Endothelial cell of umbilical vein (primary cell): ENCODE measurements at regions of chr10 and their contacts with region 1.

Region 1: DNA sequence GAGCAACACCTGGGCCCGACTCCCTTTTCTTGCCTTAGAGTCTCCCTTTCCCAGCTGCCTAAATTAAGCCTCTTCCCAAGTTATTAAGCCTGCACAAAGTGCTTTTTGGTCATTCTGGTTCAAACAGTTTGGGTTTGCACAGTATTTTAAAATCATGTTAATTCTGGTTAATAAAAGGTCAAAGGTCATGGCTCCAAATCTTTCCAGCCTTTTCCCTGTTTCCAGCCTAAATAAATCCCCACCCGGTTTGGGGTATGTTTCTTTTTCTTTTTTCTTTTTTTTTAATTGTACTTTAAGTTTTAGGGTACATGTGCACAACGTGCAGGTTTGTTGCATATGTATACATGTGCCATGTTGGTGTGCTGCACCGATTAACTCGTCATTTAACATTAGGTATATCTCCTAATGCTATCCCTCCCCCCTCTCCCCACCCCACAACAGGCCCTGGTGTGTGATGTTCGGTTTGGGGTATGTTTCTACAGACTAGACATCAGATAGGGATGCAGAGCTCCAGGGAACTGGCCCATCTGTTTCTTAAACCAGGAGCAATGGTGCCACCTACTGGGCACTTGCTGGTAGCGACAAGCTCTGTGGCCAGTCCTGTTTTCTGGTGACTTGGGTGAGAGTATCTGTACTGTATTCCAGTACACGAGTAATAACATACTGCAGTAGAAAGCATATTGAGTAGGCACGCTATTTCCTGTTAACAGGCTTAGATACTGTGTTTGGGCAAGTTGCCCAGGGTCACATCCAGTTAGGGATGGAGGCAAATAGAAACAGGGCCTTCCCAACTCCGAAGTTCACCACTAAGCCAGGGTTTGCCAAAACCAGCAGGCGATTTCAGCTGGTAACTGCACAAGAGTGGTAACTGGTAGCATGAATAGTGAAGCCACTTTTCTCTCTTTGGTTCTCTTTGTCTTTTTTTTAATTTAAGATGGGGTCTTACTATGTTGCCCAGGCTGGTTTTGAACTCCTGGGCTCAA is 60.6 kb upstream of the TRIM8 start:
- DNase-seq: peak; percentile 86
- H3K4me3 ChIP-seq: no peak overlapping the region
- H3K27ac ChIP-seq: no peak overlapping the region
- H3K4me1 ChIP-seq: peaks cover 16% of the 10 kb centered on the region
- H3K27me3 ChIP-seq: no peaks in the 10 kb centered on the region
- CTCF ChIP-seq: peak; percentile 78 to 79
- POLR2A ChIP-seq: no peak

Region 2: DNA sequence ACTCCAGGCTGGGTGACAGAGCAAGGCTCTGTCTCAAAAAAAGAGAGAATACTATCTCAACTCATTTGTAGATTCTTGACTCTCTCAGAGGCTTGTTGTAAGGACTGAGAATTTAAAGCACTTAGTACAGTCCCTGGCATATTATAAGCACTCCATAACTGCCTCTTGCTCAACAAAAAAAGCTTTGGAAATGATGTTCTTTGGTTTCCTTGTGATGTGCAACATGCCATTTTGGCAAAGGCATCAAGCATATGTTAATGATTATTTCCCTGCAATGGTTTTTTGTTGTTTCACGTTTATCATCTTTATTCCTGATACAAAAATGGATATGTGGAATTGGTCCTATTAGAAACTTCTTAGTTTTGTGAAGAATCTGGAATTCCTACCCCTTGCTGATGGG is 415.9 kb before region 1 on chr10:
- CTCF ChIA-PET with region 1: interaction called, 13 read pairs
- POLR2A ChIA-PET with region 1: no interaction called
- dilution Hi-C with region 1: no loop called
- intact Hi-C with region 1: loop called (anchors 10 kb)
- DNase-seq: no peak
- H3K4me3 ChIP-seq: no peak overlapping the region
- H3K27ac ChIP-seq: no peak overlapping the region
- H3K4me1 ChIP-seq: no peaks in the 10 kb centered on the region
- H3K27me3 ChIP-seq: no peaks in the 10 kb centered on the region
- CTCF ChIP-seq: no peak
- POLR2A ChIP-seq: no peak

Region 3: GRCh38 chr10:102484021-102484420 is 99.7 kb before region 1 on chr10:
- CTCF ChIA-PET with region 1: interaction called, 28 read pairs
- POLR2A ChIA-PET with region 1: no interaction called
- dilution Hi-C with region 1: no loop called
- intact Hi-C with region 1: no loop called
- DNase-seq: no peak
- H3K4me3 ChIP-seq: no peak overlapping the region
- H3K27ac ChIP-seq: no peak overlapping the region
- H3K4me1 ChIP-seq: no peaks in the 10 kb centered on the region
- H3K27me3 ChIP-seq: no peaks in the 10 kb centered on the region
- CTCF ChIP-seq: no peak
- POLR2A ChIP-seq: no peak

Region 4: DNA sequence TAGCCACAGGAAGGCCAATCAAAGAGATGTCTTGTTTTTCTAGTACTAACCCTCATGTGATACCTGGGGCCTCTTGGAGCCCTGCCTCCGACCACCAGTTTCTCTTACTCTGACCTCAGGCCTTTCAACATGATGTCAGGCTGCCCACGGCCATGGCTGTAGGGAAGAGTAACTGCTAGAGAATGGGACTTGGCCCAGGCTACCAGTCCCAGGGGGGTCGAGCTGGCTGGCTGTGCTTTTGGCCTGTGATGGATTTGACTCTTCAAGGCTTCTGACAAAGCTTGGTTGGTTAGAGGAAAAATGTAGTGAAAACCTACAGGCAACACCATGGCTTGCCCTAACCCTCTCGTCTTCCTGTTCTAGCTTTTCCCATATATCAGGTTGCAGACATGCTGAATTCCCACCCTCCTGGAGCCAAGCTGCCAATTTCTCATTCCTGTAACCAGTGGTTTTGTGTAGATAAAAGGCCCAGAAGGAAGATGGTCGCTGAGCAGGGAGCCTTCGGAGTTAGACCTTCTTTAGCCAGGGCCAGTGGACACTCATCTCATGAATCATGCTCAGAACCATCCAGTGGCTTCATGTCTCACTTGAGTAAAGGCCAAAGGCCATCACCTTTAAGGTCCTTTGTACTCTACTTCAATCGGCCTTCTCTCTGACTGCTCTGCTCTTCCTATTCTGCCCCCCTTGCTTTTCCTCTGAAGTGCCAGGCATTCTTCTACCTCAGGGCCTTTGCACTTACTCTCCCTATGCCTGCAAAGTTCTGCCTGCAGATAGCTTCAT is 60.3 kb before region 1 on chr10:
- CTCF ChIA-PET with region 1: interaction called, 11 read pairs
- POLR2A ChIA-PET with region 1: no interaction called
- dilution Hi-C with region 1: no loop called
- intact Hi-C with region 1: no loop called
- DNase-seq: no peak
- H3K4me3 ChIP-seq: no peak overlapping the region
- H3K27ac ChIP-seq: no peak overlapping the region
- H3K4me1 ChIP-seq: no peaks in the 10 kb centered on the region
- H3K27me3 ChIP-seq: no peaks in the 10 kb centered on the region
- CTCF ChIP-seq: no peak
- POLR2A ChIP-seq: no peak

Region 5: GRCh38 chr10:102596506-102596971 is 12.8 kb after region 1 on chr10:
- CTCF ChIA-PET with region 1: interaction called, 34 read pairs
- POLR2A ChIA-PET with region 1: no interaction called
- dilution Hi-C with region 1: no loop called
- intact Hi-C with region 1: no loop called
- DNase-seq: peak; percentile 74
- H3K4me3 ChIP-seq: no peak overlapping the region
- H3K27ac ChIP-seq: peak overlapping the region; percentile 92
- H3K4me1 ChIP-seq: peaks cover 64% of the 10 kb centered on the region
- H3K27me3 ChIP-seq: no peaks in the 10 kb centered on the region
- CTCF ChIP-seq: peak; percentile 79
- POLR2A ChIP-seq: no peak

Region 6: DNA sequence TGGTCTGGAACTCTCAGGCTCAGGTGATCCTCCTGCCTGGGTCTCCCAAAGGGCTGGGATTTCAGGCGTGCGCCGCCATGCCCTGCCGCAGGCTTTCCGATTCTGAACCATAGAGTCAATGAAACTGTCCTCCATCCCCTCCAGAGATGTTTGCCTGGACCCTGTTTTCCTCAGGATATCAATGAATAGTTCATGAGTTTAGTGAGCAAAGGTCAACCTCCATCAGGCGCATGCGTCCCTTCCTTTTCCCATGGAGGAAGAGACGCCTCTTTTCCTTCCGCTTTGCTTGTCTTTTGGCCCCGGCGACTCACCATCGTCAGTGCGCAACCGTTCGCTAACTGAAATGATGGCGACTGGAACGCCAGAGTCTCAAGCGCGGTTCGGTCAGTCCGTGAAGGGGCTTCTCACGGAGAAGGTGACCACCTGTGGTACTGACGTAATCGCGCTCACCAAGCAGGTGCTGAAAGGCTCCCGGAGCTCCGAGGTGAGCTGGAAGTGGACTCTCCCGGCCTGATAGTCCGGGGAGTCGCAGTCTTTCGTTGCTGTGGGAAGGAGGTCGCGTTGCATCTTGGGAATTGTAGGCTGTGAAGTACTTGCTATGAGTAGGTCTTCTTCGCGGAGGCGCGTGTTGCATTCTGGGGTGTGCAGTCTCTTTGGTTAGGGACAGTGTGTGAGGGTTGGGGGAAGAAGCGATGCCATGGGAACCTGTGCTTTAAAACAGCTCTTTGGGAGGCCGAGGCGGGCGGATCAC is 270.4 kb after region 1 on chr10 and contains the start of gene BORCS7:
- CTCF ChIA-PET with region 1: no interaction called
- POLR2A ChIA-PET with region 1: no interaction called
- dilution Hi-C with region 1: no loop called
- intact Hi-C with region 1: no loop called
- DNase-seq: peak; percentile 94
- H3K4me3 ChIP-seq: peak within 1 kb of the TSS; percentile 52 to 81 (median 60)
- H3K27ac ChIP-seq: peak within 1 kb of the TSS; percentile 86
- H3K4me1 ChIP-seq: peaks cover 3% of the 10 kb centered on the region
- H3K27me3 ChIP-seq: no peaks in the 10 kb centered on the region
- CTCF ChIP-seq: no peak
- POLR2A ChIP-seq: peak; percentile 88
- total RNA-seq, gene BORCS7: 16.2 and 16.9 TPM in 2 replicates